Esophagus muscularis mucosa (tissue), 4 donors: ENCODE measurements at regions of chr16 and their contacts with region 1.

Region 1: GRCh38 chr16:27449434-27450195 is 47.6 kb downstream of the IL21R start:
- DNase-seq: no peak
- H3K4me3 ChIP-seq: no peak overlapping the region
- H3K27ac ChIP-seq: no peak overlapping the region
- H3K4me1 ChIP-seq: peaks cover 0 to 8% (median 3%) of the 10 kb centered on the region in 4 donors
- H3K27me3 ChIP-seq: peaks cover 0 to 53% (median 8%) of the 10 kb centered on the region in 4 donors
- CTCF ChIP-seq: no peak
- EP300 ChIP-seq: no peak
- POLR2A ChIP-seq: no peak

Region 2: GRCh38 chr16:27169511-27170071 is 280.0 kb before region 1 on chr16:
- intact Hi-C with region 1: loop called (anchors 5 kb)
- DNase-seq: no peak
- H3K4me3 ChIP-seq: no peak overlapping the region
- H3K27ac ChIP-seq: no peak overlapping the region
- H3K4me1 ChIP-seq: no peaks in the 10 kb centered on the region
- H3K27me3 ChIP-seq: no peaks in the 10 kb centered on the region
- CTCF ChIP-seq: no peak
- EP300 ChIP-seq: no peak
- POLR2A ChIP-seq: no peak

Region 3: DNA sequence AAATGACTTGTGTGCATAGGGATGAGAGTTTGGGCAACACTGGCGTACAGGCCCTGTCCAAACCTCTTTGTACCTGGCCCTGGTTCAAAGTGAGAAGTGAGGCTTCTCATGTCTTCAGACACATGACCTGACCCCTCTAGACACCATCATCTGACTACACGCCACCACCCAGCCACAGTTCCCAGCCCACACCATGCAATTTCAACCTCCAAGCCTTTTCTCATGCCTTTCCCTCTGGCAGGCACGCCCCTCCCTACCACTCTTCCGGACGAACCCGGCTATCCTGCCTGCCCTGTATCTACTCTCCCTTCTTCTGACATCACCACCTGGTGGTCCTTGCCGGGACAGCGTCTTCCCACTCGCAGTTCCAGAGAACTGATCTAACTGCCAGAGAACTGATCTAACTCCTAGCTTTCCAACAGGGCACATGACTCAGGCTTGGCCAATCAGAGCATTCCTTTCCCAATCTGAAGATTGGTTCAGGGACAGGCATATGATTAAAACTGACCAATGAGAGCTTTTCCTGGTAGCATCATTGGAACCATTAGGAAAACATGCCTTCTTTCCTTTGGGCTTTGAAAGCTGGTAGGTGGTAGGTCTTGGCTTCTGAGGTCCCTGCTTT is 74.7 kb before region 1 on chr16:
- intact Hi-C with region 1: loop called (anchors 5 kb)
- DNase-seq: no peak
- H3K4me3 ChIP-seq: peak overlapping the region in 1 of 4 donors; percentile 14
- H3K27ac ChIP-seq: peak overlapping the region in 1 of 4 donors; percentile 49
- H3K4me1 ChIP-seq: peaks cover 0 to 12% (median 3%) of the 10 kb centered on the region in 4 donors
- H3K27me3 ChIP-seq: no peaks in the 10 kb centered on the region
- CTCF ChIP-seq: peak; percentile 41 to 56 (median 42)
- EP300 ChIP-seq: no peak
- POLR2A ChIP-seq: no peak